CD14-positive monocyte (primary cell): ENCODE measurements at regions of chr3 and their contacts with region 1.

Region 1: DNA sequence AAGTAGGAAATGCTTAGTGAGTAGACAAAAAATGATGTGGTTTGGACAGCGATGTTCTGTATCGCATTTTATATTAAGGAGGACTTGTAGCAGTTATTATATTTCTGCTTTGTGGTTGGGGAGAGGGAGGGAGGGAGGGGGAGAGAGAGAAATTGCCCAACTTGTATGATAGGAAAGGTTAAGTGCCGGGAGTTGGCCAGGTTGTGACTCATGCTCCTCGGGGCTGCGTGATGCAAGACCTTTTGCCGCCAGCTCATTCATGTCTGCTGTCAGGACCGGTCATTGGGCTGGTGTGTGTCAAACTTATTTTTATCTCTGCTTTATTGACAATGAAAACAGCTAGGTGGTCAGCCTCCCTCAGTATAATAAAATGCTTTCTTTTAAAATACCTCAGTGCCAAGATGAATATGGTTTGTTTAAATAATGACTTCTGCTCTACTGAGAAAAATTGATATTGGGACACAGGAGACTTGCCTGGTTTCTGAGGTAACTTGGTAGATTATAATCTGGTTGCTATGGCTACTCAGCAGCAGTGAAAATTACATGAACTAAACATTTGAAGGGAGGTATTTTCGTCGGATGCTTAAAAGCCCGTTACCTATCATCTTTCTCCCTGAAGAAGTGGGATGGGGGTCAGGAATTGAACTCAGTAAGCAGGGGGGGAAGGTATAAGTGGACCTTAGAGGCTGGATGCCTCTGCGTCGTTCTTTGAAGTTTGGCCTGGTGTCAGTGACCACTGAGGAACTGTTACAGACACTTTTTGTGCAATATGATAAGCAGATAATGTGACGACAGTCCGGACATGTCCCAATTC is 90.7 kb downstream of the FNDC3B start:
- DNase-seq: peak; percentile 99 to 100 (median 99)
- H3K4me3 ChIP-seq: peak overlapping the region in 2 of 3 experiments; percentile 19 to 43
- H3K4me3 Mint-ChIP-seq: peak overlapping the region; percentile 49 to 83
- H3K27ac ChIP-seq: peak overlapping the region; percentile 96 to 100
- H3K27ac Mint-ChIP-seq: peak overlapping the region; percentile 99 to 100 (median 100)
- H3K4me1 ChIP-seq: peaks cover 78 to 91% of the 10 kb centered on the region in 2 donors
- H3K4me1 Mint-ChIP-seq: peaks cover 81% of the 10 kb centered on the region
- H3K27me3 ChIP-seq: no peaks in the 10 kb centered on the region
- H3K27me3 Mint-ChIP-seq: no peaks in the 10 kb centered on the region
- CTCF ChIP-seq: no peak

Region 2: GRCh38 chr3:172159962-172160538 is 30.0 kb after region 1 on chr3:
- intact Hi-C with region 1: loop called in 1 of 2 experiments (anchors 5 kb)
- DNase-seq: peak; percentile 76 to 86 (median 84)
- H3K4me3 ChIP-seq: no peak overlapping the region
- H3K4me3 Mint-ChIP-seq: no peak overlapping the region
- H3K27ac ChIP-seq: peak overlapping the region; percentile 66 to 79
- H3K27ac Mint-ChIP-seq: peak overlapping the region; percentile 84 to 94 (median 90)
- H3K4me1 ChIP-seq: peaks cover 10 to 19% of the 10 kb centered on the region in 2 donors
- H3K4me1 Mint-ChIP-seq: peaks cover 32% of the 10 kb centered on the region
- H3K27me3 ChIP-seq: no peaks in the 10 kb centered on the region
- H3K27me3 Mint-ChIP-seq: no peaks in the 10 kb centered on the region
- CTCF ChIP-seq: no peak

Region 3: GRCh38 chr3:173660645-173661615 is 1530.9 kb after region 1 on chr3:
- intact Hi-C with region 1: no loop called
- DNase-seq: no peak
- H3K4me3 ChIP-seq: no peak overlapping the region
- H3K4me3 Mint-ChIP-seq: no peak overlapping the region
- H3K27ac ChIP-seq: no peak overlapping the region
- H3K27ac Mint-ChIP-seq: no peak overlapping the region
- H3K4me1 ChIP-seq: no peaks in the 10 kb centered on the region
- H3K4me1 Mint-ChIP-seq: no peaks in the 10 kb centered on the region
- H3K27me3 ChIP-seq: no peaks in the 10 kb centered on the region
- H3K27me3 Mint-ChIP-seq: no peaks in the 10 kb centered on the region
- CTCF ChIP-seq: no peak